ENCODE measurements at regions of chr2 and their contacts with region 1.

Region 1: DNA sequence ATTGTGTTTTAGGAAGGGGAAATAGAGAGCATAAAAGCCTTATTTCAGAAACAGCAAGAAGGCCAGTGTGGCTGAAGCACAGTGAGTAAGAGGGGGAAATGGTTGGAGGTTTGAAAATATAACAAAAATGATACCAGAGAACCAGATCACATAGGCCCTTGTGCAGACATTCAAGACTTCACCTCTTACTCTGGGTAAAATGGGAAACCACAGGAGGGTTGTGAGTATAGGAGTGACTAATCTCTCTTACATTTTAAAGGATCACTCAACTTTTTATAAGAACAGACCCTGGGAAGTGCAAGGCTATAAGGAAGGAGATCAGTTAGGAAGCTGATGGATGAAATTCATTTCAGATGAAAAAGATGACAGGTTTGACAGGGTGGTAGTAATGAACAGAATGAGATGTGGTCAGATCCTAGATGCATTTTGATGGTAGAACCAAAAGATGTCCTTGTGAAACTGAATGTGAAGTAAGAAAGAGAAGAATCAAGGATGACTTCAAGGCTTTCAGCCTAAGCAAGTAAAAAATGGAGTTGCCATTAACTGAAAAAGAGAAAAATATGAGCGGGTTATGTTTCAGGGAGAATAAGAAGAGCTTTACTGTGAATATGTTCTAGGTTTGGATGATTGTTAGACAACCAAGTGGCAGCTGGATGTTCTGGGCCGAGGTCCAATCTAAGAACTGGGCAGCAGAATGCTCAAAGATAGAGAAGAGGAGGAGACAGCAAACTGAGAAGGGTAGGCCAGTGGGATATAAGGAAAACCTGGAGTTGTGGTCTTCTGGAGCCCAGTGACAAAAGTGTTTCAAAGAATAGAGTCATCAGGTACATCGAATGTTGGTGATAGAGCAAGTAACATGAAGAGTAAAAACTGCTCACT is 65.1 kb downstream of the USP40 start:
- DNase-seq: no peak
- ATAC-seq: no peak
- H3K4me3 ChIP-seq: no peak overlapping the region
- H3K4me3 Mint-ChIP-seq: no peak overlapping the region
- H3K27ac ChIP-seq: no peak overlapping the region
- H3K27ac Mint-ChIP-seq: no peak overlapping the region
- H3K4me1 ChIP-seq: no peaks in the 10 kb centered on the region
- H3K4me1 Mint-ChIP-seq: no peaks in the 10 kb centered on the region
- H3K27me3 ChIP-seq: no peaks in the 10 kb centered on the region
- H3K27me3 Mint-ChIP-seq: no peaks in the 10 kb centered on the region

Region 2: DNA sequence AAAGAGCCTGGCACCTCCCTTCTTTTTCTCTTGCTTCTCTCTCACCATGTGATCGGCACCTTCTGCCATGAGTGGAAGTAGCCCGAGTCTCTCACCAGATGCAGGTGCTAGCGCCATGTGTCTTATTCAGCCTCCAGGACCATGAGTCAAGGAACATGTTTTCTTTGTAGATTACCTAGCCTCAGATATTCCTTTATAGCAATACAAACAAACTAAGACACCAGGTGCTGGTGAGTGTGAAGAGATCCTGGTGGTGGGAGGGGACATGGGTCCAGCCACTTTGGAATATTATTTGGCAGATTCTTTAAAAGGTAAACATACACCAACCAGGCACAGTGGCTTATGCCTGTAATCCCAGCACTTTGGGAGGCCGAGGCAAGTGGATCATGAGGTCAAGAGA is 71.0 kb after region 1 on chr2:
- CTCF ChIA-PET with region 1: no interaction called
- POLR2A ChIA-PET with region 1: interaction called in 1 of 2 experiments, 10 read pairs
- DNase-seq: no peak
- ATAC-seq: no peak
- H3K4me3 ChIP-seq: no peak overlapping the region
- H3K4me3 Mint-ChIP-seq: no peak overlapping the region
- H3K27ac ChIP-seq: no peak overlapping the region
- H3K27ac Mint-ChIP-seq: no peak overlapping the region
- H3K4me1 ChIP-seq: no peaks in the 10 kb centered on the region
- H3K4me1 Mint-ChIP-seq: no peaks in the 10 kb centered on the region
- H3K27me3 ChIP-seq: no peaks in the 10 kb centered on the region
- H3K27me3 Mint-ChIP-seq: peaks cover 2 to 8% of the 10 kb centered on the region in 2 donors

Region 3: DNA sequence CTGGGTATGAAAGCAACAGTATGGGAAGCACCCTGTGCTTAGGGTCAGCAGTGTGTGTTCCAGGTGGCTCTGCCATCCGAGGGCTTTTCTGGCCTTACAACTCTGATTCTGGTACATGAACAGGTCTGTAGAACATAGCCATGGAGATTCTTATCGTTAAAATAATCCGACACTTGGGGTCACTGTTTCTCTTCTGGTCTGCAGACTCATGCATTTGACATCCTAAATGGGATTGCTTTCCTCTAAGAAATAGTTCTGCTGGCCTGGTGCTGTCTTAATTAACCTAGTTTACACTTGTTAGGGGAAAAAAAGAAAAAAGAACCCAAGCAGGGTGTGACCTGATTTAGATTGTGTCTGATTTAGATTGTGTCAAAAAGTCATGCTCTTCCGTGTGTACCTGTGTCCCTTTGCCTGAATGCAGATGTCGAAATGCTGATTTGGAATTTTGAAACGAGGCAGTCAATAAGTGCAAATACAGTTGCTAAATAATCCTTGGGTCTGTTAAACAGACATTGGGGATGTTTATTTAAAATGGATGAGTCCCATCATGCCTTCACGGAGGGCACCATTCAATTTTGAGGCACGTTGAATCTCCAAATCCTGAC is 475.4 kb after region 1 on chr2:
- CTCF ChIA-PET with region 1: no interaction called
- POLR2A ChIA-PET with region 1: no interaction called
- DNase-seq: peak in 5 of 35 experiments; percentile 2 to 80 (median 26)
- ATAC-seq: peak in 3 of 4 experiments; percentile 74 to 78 (median 75)
- H3K4me3 ChIP-seq: no peak overlapping the region
- H3K4me3 Mint-ChIP-seq: no peak overlapping the region
- H3K27ac ChIP-seq: peak overlapping the region; percentile 38
- H3K27ac Mint-ChIP-seq: peak overlapping the region; percentile 26 to 62
- H3K4me1 ChIP-seq: peaks cover 0 to 19% of the 10 kb centered on the region in 2 experiments
- H3K4me1 Mint-ChIP-seq: peaks cover 18 to 27% (median 26%) of the 10 kb centered on the region in 3 donors
- H3K27me3 ChIP-seq: peaks cover 0 to 7% of the 10 kb centered on the region in 2 experiments
- H3K27me3 Mint-ChIP-seq: peaks cover 0 to 2% of the 10 kb centered on the region in 2 donors

Measured in T-cell (primary cell).